ENCODE measurements at regions of chr9 and their contacts with region 1.

Region 1: GRCh38 chr9:71806901-71807307 is 38.6 kb upstream of the CEMIP2 start:
- DNase-seq: peak in 2 of 3 donors; percentile 44 to 71
- ATAC-seq: peak; percentile 96
- H3K4me3 ChIP-seq: no peak overlapping the region
- H3K4me1 ChIP-seq: peaks cover 5% of the 10 kb centered on the region
- CTCF ChIP-seq: peak; percentile 63

Region 2: DNA sequence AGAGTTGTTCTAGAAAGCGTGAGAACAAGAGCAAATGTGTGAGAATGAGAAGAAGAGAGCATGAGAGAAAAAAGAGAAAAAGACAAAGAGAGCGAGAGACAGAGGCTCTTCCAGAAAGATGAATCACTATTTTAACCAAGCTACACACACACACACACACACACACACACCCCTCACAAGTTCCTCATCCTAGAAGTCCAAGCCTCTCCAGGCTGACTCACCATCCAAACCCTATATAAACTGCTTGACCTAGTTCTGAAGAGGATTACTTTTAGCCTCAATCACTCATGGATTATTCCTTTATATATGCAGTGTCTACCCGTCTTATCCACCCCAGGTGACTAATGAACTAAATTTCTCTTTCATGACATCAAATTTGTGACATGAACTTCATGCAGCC is 215.9 kb after region 1 on chr9:
- intact Hi-C with region 1: loop called in 1 of 2 experiments (anchors 10 kb)
- DNase-seq: peak in 1 of 3 donors; percentile 26
- ATAC-seq: peak; percentile 88
- H3K4me3 ChIP-seq: no peak overlapping the region
- H3K4me1 ChIP-seq: peaks cover 5% of the 10 kb centered on the region
- CTCF ChIP-seq: no peak